ENCODE measurements at regions of chr5 and their contacts with region 1.

Region 1: GRCh38 chr5:119397518-119398380 is 41.9 kb downstream of the TNFAIP8 start:
- DNase-seq: peak; percentile 50
- H3K4me3 Mint-ChIP-seq: peak overlapping the region; percentile 39
- H3K27ac Mint-ChIP-seq: peak overlapping the region; percentile 90
- H3K4me1 Mint-ChIP-seq: peaks cover 84% of the 10 kb centered on the region
- H3K27me3 Mint-ChIP-seq: no peaks in the 10 kb centered on the region

Region 2: GRCh38 chr5:119031905-119032304 is 365.8 kb before region 1 on chr5:
- CTCF ChIA-PET with region 1: no interaction called
- POLR2A ChIA-PET with region 1: no interaction called
- intact Hi-C with region 1: loop called (anchors 1 kb)
- DNase-seq: peak; percentile 35
- H3K4me3 Mint-ChIP-seq: no peak overlapping the region
- H3K27ac Mint-ChIP-seq: peak overlapping the region; percentile 54
- H3K4me1 Mint-ChIP-seq: peaks cover 22% of the 10 kb centered on the region
- H3K27me3 Mint-ChIP-seq: no peaks in the 10 kb centered on the region

Region 3: GRCh38 chr5:119267958-119268386 is 129.8 kb before region 1 on chr5:
- CTCF ChIA-PET with region 1: interaction called, 6 read pairs
- POLR2A ChIA-PET with region 1: interaction called, 4 read pairs
- intact Hi-C with region 1: loop called (anchors 2 kb)
- DNase-seq: peak; percentile 91
- H3K4me3 Mint-ChIP-seq: peak overlapping the region; percentile 99
- H3K27ac Mint-ChIP-seq: peak overlapping the region; percentile 99
- H3K4me1 Mint-ChIP-seq: peaks cover 49% of the 10 kb centered on the region
- H3K27me3 Mint-ChIP-seq: no peaks in the 10 kb centered on the region

Region 4: GRCh38 chr5:119309326-119309725 is 88.4 kb before region 1 on chr5:
- CTCF ChIA-PET with region 1: no interaction called
- POLR2A ChIA-PET with region 1: no interaction called
- intact Hi-C with region 1: loop called (anchors 1 kb)
- DNase-seq: no peak
- H3K4me3 Mint-ChIP-seq: peak overlapping the region; percentile 43
- H3K27ac Mint-ChIP-seq: peak overlapping the region; percentile 90
- H3K4me1 Mint-ChIP-seq: peaks cover 94% of the 10 kb centered on the region
- H3K27me3 Mint-ChIP-seq: no peaks in the 10 kb centered on the region

Region 5: GRCh38 chr5:119328753-119329602 is 68.8 kb before region 1 on chr5:
- CTCF ChIA-PET with region 1: no interaction called
- POLR2A ChIA-PET with region 1: no interaction called
- intact Hi-C with region 1: loop called (anchors 1 kb)
- DNase-seq: peak; percentile 76
- H3K4me3 Mint-ChIP-seq: peak overlapping the region; percentile 35
- H3K27ac Mint-ChIP-seq: peak overlapping the region; percentile 96
- H3K4me1 Mint-ChIP-seq: peaks cover 95% of the 10 kb centered on the region
- H3K27me3 Mint-ChIP-seq: no peaks in the 10 kb centered on the region

Region 6: GRCh38 chr5:119355685-119356611 is 41.8 kb before region 1 on chr5 and contains the start of gene TNFAIP8:
- CTCF ChIA-PET with region 1: interaction called, 3 read pairs
- POLR2A ChIA-PET with region 1: interaction called, 5 read pairs
- intact Hi-C with region 1: loop called (anchors 1 kb)
- DNase-seq: peak; percentile 90
- H3K4me3 Mint-ChIP-seq: peak within 1 kb of the TSS; percentile 99
- H3K27ac Mint-ChIP-seq: peak within 1 kb of the TSS; percentile 90
- H3K4me1 Mint-ChIP-seq: peaks cover 71% of the 10 kb centered on the region
- H3K27me3 Mint-ChIP-seq: no peaks in the 10 kb centered on the region
- total RNA-seq, gene TNFAIP8: 153 to 159 TPM

Region 7: DNA sequence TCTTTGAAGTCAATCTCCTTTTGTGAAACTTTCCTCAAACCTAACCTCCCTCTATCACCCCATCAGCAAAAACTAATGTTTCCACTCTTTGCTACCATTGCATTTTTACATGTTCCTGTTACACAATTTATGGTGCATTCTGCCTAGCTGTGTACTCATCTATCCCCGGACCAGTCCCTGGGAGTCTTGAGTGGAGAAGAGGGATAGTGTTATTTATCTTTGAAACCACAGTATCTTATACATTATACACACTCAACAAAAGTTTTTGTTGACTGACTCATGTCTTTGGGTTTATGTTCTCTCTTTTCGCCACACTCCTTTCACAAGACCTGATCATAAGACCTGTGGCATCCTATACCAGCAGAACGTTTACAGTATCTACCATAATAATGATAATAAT is 15.6 kb before region 1 on chr5:
- CTCF ChIA-PET with region 1: no interaction called
- POLR2A ChIA-PET with region 1: interaction called, 5 read pairs
- intact Hi-C with region 1: loop called (anchors 1 kb)
- DNase-seq: no peak
- H3K4me3 Mint-ChIP-seq: no peak overlapping the region
- H3K27ac Mint-ChIP-seq: peak overlapping the region; percentile 81
- H3K4me1 Mint-ChIP-seq: peaks cover 89% of the 10 kb centered on the region
- H3K27me3 Mint-ChIP-seq: no peaks in the 10 kb centered on the region